ENCODE measurements at regions of chr3 and their contacts with region 1.

Region 1: DNA sequence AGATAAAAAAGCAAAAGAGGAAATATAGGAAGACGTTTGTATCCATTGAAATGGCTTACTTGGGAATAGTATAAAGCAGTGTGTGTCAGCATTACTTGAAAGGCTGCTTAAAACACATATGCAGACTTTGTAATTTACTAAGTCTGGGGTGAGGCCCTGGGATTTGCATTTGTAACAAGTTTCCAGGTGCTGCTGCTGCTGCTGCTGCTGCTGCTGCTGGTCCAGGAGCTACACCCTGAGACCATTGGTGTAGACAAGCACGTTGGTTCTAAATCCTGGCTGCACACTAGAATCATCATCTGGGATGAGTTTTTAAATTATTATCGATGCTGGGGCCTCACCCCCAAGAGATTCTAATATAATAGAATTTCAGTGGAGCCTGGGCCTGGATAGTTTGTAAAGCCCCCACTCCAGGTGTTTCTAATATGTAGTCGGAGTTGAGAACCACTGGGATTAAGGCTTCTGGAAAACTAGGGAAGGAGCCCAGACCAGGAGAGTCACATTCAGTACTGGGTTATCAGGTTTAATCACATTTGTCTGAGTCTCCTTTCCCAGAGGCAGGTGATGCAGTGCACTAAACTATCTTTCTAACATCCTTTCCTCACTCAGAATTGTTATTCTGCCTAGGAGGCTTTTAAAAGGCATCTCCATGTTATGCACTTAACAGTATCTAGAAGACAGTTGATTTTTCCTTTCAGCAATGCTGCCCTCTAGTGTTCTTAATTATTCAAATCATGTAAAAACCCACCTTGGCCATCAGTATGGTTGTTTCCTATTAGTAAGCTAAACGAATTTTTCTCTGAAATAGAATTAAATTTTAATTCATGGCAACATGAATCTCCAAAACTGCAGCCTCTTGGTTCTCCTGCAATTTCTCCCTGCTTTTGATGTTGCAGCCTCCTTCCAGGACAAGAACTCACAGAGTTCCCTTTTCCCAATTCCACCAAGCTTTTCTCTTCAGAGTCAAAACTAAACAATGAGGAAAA is 45.4 kb downstream of the SSR3 start:
- DNase-seq: no peak
- ATAC-seq: peak; percentile 81
- H3K4me3 Mint-ChIP-seq: no peak overlapping the region
- H3K27ac Mint-ChIP-seq: no peak overlapping the region
- H3K4me1 Mint-ChIP-seq: peaks cover 8% of the 10 kb centered on the region
- H3K27me3 Mint-ChIP-seq: peaks cover 27% of the 10 kb centered on the region

Region 2: GRCh38 chr3:156151824-156152428 is 357.6 kb before region 1 on chr3:
- CTCF ChIA-PET with region 1: interaction called, 103 read pairs
- POLR2A ChIA-PET with region 1: no interaction called
- DNase-seq: peak; percentile 61
- ATAC-seq: peak; percentile 69
- H3K4me3 Mint-ChIP-seq: no peak overlapping the region
- H3K27ac Mint-ChIP-seq: no peak overlapping the region
- H3K4me1 Mint-ChIP-seq: peaks cover 4% of the 10 kb centered on the region
- H3K27me3 Mint-ChIP-seq: peaks cover 18% of the 10 kb centered on the region

Region 3: DNA sequence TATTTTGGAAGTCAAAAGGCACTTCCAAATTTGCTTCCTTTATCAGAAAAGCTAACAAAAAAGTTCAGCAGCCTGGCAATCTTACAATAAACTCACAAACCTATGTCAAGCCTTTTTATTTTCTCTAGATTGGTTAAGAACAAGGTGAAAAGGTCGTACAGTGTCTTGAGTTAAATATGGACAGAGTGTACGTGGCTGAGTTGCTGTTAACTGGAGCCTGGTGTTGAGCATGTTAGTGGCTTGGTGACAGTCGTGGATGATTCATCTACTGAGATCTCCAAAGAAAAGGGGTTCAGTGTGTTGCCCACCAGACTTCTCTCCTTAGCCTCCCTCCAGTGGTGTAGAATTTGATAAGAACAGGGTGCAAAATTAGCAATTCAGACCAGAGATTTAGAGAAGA is 44.3 kb before region 1 on chr3:
- CTCF ChIA-PET with region 1: interaction called, 18 read pairs
- POLR2A ChIA-PET with region 1: interaction called, 3 read pairs
- DNase-seq: no peak
- ATAC-seq: no peak
- H3K4me3 Mint-ChIP-seq: no peak overlapping the region
- H3K27ac Mint-ChIP-seq: no peak overlapping the region
- H3K4me1 Mint-ChIP-seq: no peaks in the 10 kb centered on the region
- H3K27me3 Mint-ChIP-seq: peaks cover 24% of the 10 kb centered on the region

Region 4: DNA sequence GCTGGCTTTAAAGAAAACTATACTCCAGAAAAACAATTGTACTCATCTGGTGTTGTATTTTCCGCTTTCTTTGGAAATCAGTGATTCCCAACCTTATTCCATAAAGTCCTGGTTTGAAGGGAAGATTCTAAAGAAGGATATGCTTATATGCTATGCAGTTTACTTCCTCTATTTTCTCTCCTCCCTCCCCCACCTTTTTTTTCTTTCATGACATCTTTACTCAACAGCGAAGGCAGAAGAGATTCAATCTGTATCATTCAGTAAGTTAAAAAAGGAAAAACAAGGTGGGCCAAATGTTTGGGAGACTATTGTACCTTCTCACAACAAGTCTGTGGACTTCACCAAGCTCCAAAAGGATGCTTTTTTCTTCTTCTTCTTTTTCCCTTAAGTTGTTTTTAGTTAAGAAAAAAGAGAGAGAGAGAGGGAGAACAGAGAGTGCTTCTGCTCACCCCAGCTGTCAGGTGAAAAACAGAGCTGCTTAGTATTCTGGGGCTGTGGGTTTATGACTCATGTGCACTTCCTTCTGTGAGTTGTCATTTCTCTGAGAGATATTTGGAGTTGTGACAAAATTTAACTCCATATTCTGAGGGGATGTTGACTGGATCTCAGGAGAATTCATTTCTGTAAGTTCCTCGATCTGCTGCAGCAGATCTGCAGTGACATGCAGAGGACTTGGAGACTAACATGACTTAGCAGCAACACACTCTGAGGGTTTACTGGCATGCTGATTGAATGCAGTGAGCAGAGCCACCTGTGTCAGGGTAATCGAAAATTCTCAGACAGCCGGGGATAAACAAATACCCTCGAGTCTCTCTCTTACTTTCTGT is 25.3 kb before region 1 on chr3:
- CTCF ChIA-PET with region 1: interaction called, 99 read pairs
- POLR2A ChIA-PET with region 1: interaction called, 5 read pairs
- DNase-seq: peak; percentile 69
- ATAC-seq: peak; percentile 92
- H3K4me3 Mint-ChIP-seq: peak overlapping the region; percentile 71
- H3K27ac Mint-ChIP-seq: peak overlapping the region; percentile 87
- H3K4me1 Mint-ChIP-seq: peaks cover 37% of the 10 kb centered on the region
- H3K27me3 Mint-ChIP-seq: peaks cover 1% of the 10 kb centered on the region

Region 5: GRCh38 chr3:156525808-156526207 is 16.3 kb after region 1 on chr3:
- CTCF ChIA-PET with region 1: interaction called, 19 read pairs
- POLR2A ChIA-PET with region 1: interaction called, 3 read pairs
- DNase-seq: no peak
- ATAC-seq: no peak
- H3K4me3 Mint-ChIP-seq: no peak overlapping the region
- H3K27ac Mint-ChIP-seq: no peak overlapping the region
- H3K4me1 Mint-ChIP-seq: peaks cover 19% of the 10 kb centered on the region
- H3K27me3 Mint-ChIP-seq: peaks cover 11% of the 10 kb centered on the region

Measured in activated CD8-positive, alpha-beta T cell treated with anti-CD3 and anti-CD28 coated beads, Interleukin-2, amount 10 ng/mL, durations not matched to agents 7 days and 5 days (primary cell).